ENCODE measurements at regions of chr19 and their contacts with region 1.

Region 1: DNA sequence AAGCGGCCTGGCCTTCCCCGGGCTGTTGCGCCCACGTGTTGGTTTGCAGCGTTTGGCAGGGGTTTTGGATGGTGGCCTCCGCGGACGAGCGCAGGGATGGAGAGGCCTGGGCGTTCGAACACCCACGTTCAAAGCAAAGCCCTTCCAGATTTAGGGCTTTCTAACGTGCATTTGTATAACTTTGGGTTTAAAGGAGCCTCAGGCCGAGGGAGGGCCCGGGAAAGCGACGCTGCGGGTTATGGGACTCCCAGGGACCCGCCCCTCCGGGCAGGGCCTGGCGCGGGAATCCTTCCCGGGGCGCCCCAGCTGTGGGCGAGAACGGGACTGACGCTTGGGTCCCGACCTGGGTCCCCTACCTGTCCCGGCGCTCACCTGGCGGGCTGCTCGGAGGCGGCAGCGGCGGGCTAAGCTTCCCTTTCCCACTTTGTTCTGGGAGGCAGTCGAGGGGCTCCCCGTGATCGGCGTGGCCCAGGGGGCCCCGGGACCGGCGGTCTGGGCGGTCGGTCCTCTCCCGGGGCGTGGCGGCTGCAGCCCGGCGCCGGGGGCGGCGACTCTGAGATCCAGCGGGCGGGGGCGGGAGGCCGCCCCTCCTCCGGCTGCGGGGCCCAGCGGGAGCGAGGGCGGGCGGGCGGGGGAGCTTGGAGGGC is at the start of gene FBXO17:
- DNase-seq: peak; percentile 83
- H3K4me3 ChIP-seq: peak within 1 kb of the TSS; percentile 75
- H3K27ac ChIP-seq: peak within 1 kb of the TSS; percentile 91
- H3K4me1 ChIP-seq: peaks cover 14% of the 10 kb centered on the region
- H3K27me3 ChIP-seq: no peaks in the 10 kb centered on the region
- CTCF ChIP-seq: no peak
- total RNA-seq, gene FBXO17: 26.0 and 29.9 TPM in 2 replicates

Region 2: DNA sequence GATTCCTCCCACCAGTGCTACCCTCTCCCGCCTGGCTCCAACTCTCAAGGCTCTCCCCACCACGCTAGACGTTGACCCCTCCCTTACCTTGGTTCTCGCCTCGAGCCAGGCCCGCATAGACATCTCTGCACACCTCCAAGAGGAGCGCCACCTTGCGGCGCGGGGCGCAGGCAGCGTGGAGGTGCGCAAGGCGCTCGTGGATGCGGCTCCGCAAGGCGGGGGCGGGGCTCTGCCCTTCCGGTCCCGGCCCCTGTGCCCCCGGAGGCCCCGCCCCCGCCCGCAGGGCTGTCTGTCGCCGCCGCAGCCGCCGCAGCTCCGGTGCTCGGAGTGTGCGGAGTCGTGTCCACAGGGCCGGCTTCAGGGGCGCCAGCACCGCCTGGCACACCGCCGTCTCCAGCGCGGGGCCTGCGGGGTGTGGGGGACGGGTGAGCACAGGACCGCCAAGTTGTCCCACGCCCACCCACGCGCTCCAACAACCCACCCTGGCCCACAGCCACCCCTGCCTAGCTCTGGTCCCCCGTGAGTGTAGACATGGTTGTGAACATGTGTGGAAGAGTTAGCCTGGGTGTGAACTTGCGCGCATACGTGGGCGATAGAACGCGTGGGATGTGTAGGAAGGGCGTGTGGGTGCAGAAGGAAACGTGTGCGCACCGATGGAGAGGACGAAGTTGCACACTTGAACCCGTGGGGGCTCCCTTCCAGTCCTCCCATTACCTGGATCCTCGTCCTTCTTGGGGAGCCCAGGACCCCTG is 105.3 kb before region 1 on chr19:
- CTCF ChIA-PET with region 1: no interaction called
- POLR2A ChIA-PET with region 1: no interaction called
- intact Hi-C with region 1: no loop called
- DNase-seq: peak; percentile 86
- H3K4me3 ChIP-seq: peak overlapping the region; percentile 50
- H3K27ac ChIP-seq: no peak overlapping the region
- H3K4me1 ChIP-seq: no peaks in the 10 kb centered on the region
- H3K27me3 ChIP-seq: no peaks in the 10 kb centered on the region
- CTCF ChIP-seq: peak; percentile 84

Region 3: DNA sequence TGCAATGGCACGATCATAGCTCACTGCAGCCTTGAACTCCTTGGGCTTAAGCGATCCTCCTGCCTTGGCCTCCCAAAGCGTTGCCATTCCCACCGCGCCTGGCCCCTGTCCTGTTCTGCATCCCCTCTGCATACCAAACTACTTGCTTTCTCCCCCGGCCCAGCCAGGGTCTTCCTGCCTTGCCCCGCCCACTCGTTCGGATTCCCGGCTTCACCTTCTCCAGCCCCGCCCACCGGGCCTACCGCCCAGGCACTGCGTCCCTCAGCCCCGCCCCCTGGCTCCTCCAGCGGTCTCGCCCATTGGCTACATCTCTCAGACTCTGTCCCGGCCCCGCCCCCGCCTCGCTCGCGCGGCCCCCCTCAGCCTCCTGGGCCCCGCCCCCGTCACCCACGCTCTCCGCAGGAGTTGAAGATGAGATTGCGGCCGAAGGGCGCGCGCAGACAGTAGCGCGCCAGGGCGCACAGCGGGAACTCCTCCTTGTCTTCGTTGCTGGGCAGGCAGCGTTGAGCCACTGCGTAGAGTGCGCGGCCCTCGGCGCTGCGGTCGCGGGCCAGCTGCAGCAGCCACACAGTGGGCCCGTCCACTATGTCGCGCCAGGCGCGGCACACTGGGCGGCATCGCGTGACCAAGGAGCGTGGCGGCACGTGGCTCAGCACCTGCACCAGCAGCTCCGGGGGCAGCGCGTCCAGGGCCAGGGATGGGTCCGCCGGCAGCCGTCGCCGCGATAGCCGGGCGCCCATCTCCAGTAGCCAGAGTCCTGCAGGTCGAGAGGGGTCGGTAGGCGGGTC is 25.6 kb before region 1 on chr19:
- CTCF ChIA-PET with region 1: no interaction called
- POLR2A ChIA-PET with region 1: no interaction called
- intact Hi-C with region 1: no loop called
- DNase-seq: peak; percentile 98
- H3K4me3 ChIP-seq: peak overlapping the region; percentile 30
- H3K27ac ChIP-seq: peak overlapping the region; percentile 60
- H3K4me1 ChIP-seq: peaks cover 6% of the 10 kb centered on the region
- H3K27me3 ChIP-seq: no peaks in the 10 kb centered on the region
- CTCF ChIP-seq: no peak

Region 4: GRCh38 chr19:38964738-38965137 is 10.6 kb before region 1 on chr19:
- CTCF ChIA-PET with region 1: interaction called, 11 read pairs
- POLR2A ChIA-PET with region 1: interaction called, 3 read pairs
- intact Hi-C with region 1: no loop called
- DNase-seq: no peak
- H3K4me3 ChIP-seq: no peak overlapping the region
- H3K27ac ChIP-seq: no peak overlapping the region
- H3K4me1 ChIP-seq: no peaks in the 10 kb centered on the region
- H3K27me3 ChIP-seq: no peaks in the 10 kb centered on the region
- CTCF ChIP-seq: no peak

Region 5: GRCh38 chr19:39110263-39110967 is 135.1 kb after region 1 on chr19:
- CTCF ChIA-PET with region 1: no interaction called
- POLR2A ChIA-PET with region 1: no interaction called
- intact Hi-C with region 1: loop called (anchors 10 kb)
- DNase-seq: peak; percentile 60
- H3K4me3 ChIP-seq: no peak overlapping the region
- H3K27ac ChIP-seq: no peak overlapping the region
- H3K4me1 ChIP-seq: no peaks in the 10 kb centered on the region
- H3K27me3 ChIP-seq: no peaks in the 10 kb centered on the region
- CTCF ChIP-seq: peak; percentile 89